Activated T-helper 2 cell treated with anti-CD3 and anti-CD28 coated beads, Interferon-gamma antibody, Interleukin-2, Interleukin-4, amounts not matched to agents 10 μg/mL and 5 μg/mL and 100 μg/mL, durations not matched to agents 14 hours and 24 hours and 36 hours (primary cell): ENCODE measurements at regions of chr11 and their contacts with region 1.

Region 1: DNA sequence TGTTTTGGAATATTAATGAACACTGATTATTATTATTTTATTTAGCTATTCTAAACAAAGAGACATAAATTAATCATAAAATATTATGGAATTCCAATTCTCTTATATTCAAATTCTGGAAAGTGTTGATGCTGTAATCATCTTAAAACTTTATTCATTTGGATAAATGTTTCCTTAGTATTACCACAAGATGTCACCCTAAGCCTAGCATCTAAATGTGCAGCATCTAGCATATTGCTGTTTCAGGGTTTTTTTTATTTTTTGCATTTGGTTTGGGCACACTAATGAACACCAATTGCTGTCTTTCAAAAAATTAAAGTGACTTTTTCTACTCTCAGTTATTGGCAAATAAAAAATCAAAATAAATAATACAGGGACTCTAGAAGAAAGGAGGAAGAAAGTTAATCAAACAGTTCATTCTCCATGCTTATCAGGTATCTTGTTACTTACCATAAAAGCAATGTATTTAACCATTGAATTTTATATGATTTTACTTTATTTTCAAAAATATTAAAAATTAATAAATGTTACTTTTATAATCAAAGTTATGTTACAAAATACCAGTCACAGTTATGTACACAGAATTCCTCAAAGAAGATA is 31.8 kb downstream of the DLG2 start:
- DNase-seq: no peak
- H3K4me3 Mint-ChIP-seq: no peak overlapping the region
- H3K27ac Mint-ChIP-seq: no peak overlapping the region
- H3K4me1 Mint-ChIP-seq: no peaks in the 10 kb centered on the region
- H3K27me3 Mint-ChIP-seq: peaks cover 15% of the 10 kb centered on the region

Region 2: DNA sequence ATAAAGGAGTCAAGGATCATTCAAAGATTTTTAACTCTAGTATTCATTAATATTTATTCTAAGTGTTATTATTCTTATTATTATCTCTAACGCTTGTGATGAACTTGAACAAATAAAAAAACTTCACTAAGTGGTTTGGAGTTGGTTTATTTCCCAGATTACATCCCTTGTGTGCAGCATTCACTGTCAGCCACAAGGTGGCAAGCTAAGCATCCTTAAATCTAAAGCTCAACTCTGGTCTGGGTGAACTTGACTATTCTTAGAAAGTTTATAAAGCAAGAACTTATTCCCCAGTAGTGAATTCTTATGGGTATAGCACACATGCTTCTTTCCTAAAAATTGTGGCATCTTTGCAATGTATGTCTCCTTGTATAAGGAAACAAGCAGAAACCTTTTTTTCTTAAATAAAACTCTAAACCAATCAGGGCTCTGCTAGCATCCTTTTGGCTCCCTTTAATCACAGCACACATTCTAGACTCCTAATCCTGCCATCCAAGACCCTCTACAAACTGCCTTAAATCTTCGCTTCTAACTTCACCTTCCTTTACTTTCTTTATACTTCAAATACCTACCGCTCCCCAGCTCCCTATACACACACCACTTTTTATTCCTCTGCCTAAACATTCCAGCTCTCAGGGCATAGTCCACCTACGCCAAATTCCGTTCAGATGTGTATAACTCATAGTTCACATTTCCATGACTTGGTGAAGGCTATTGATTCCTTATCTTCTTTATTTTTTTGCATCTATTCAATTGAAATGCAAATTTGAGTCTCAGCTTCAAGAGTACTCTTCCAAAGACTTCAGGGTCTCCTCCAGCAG is 1037.1 kb before region 1 on chr11:
- intact Hi-C with region 1: loop called (anchors 5 kb)
- DNase-seq: no peak
- H3K4me3 Mint-ChIP-seq: no peak overlapping the region
- H3K27ac Mint-ChIP-seq: no peak overlapping the region
- H3K4me1 Mint-ChIP-seq: no peaks in the 10 kb centered on the region
- H3K27me3 Mint-ChIP-seq: no peaks in the 10 kb centered on the region

Region 3: GRCh38 chr11:85569525-85569924 is 25.9 kb before region 1 on chr11:
- intact Hi-C with region 1: no loop called
- DNase-seq: no peak
- H3K4me3 Mint-ChIP-seq: no peak overlapping the region
- H3K27ac Mint-ChIP-seq: no peak overlapping the region
- H3K4me1 Mint-ChIP-seq: peaks cover 6% of the 10 kb centered on the region
- H3K27me3 Mint-ChIP-seq: peaks cover 19% of the 10 kb centered on the region

Region 4: DNA sequence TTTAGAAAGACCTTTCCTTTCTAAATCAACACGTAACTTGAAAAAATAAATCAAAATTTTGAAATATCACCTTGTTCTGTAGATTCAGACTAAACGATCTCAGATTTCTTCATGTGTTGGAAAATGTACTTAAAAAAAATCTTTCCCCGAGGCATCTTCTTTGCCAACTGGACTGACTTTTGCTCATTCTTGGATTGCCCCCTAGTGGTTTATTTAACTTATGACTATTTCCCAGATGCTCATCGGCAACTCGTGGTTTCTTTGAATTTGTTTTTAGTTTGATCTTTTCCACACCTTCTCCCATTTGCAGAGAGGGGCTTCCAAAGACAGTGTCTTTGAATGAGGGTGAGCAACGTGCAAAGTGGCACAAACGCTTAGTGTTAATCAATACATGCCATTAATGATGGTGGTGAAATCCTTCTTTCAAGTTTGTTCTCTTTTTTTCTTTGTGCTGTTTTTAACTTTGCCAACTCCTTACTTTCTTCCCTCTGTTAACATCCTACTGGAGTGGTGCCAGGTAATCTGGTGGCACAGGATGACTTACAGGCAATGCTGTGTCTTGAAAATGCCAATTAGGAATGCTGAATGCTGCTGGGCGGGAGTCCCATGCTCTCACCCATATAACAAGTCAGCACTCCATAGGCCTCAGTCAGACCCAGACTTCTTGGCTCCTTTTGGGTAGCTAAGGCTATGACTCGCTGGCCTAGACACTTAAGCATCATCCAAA is 1223.2 kb after region 1 on chr11:
- intact Hi-C with region 1: loop called (anchors 10 kb)
- DNase-seq: no peak
- H3K4me3 Mint-ChIP-seq: no peak overlapping the region
- H3K27ac Mint-ChIP-seq: no peak overlapping the region
- H3K4me1 Mint-ChIP-seq: no peaks in the 10 kb centered on the region
- H3K27me3 Mint-ChIP-seq: peaks cover 20% of the 10 kb centered on the region